CD4-positive, alpha-beta T cell (primary cell): ENCODE measurements at regions of chr12 and their contacts with region 1.

Region 1: DNA sequence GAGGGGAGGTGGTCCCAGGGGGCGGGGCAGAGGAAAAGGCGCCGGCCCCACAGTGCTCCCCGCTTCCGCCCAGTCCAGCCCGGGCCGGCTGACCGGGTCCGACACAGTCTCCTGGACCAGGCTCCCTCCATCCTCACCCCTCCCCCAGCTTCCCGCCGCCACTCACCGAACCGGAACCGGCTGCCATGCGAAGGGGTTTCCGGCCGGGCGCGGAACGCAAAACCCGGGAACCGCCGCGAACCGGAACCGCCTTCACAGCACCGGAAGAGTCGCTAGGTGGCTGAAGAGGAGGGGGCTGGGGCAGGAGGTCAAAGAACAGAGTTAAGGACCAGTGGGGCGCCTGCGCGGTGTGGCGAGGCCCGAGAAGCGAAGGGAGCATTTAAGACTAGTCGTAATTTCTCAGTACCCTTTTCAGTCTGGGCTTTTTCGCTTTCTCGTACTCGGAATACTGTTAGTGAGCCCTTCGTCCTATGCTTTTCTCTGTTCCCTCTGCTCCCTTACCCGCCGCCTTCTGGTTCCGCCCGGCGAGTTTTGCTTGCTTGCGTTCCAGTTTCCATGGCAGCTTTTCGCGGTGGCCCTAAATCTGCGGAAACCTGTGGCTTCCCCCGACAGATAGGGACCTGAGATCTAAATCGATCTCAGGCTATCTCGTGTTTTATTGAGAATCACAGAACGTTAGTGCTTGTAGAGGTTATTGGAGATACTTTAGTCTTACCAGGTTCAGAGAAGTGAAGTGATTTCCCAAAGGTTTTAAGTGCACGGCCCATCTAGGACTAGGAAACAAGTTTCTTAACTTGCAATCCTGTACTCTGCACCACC is at the start of gene SENP1:
- DNase-seq: peak; percentile 84 to 95 (median 88)
- ATAC-seq: peak; percentile 80
- H3K4me3 ChIP-seq: peak within 1 kb of the TSS; percentile 89
- H3K4me3 Mint-ChIP-seq: peak within 1 kb of the TSS; percentile 94
- H3K27ac ChIP-seq: peak within 1 kb of the TSS; percentile 94 to 96
- H3K27ac Mint-ChIP-seq: peak within 1 kb of the TSS; percentile 89
- H3K4me1 ChIP-seq: peaks cover 33% of the 10 kb centered on the region
- H3K4me1 Mint-ChIP-seq: peaks cover 54% of the 10 kb centered on the region
- H3K27me3 ChIP-seq: no peaks in the 10 kb centered on the region
- H3K27me3 Mint-ChIP-seq: no peaks in the 10 kb centered on the region
- CTCF ChIP-seq: peak; percentile 44
- total RNA-seq, gene SENP1: 20.3 to 25.7 TPM

Region 2: DNA sequence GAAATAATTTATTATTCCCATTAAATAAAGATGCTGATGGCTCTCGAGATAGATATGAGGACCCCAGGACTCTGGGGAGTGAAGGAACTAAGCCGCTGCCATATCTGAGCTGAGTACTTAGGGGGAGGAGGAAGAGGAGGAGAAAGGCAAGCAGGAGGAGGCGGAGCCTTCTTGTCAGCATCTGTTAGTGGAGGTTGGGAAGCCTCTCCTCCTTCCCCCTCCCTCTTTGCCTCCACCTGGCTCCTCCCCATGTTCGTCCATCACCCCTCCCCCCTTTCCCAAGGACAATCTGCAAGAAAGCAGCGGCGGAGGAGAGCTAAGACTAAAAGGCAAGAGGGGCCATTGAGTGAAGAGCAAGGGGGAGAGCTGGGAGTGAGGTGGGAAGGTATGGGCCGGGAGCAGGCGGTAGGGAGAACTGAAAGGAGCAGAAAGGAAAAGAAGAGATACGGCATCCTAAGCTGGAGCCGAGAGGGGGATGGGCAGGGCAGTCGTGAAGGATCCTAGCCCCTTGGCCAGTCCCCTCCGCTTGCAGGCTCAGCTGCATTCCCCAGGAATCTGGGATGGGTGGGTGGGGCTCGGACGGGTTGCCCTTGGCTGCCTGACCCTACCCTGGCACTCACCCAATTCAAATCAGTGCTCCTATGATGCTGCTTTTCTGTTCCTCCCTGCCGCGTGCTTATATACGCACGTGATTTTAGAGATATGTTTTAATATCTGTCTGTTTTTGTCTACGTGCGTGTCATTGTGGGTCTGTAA is 13.2 kb after region 1 on chr12 and contains the start of gene PFKM:
- CTCF ChIA-PET with region 1: no interaction called
- POLR2A ChIA-PET with region 1: interaction called, 19 read pairs
- intact Hi-C with region 1: loop called in 1 of 2 experiments (anchors 2 kb)
- DNase-seq: peak; percentile 37 to 88 (median 56)
- ATAC-seq: peak; percentile 98
- H3K4me3 ChIP-seq: peak within 1 kb of the TSS; percentile 74
- H3K4me3 Mint-ChIP-seq: peak within 1 kb of the TSS; percentile 98
- H3K27ac ChIP-seq: no peak within 1 kb of the TSS
- H3K27ac Mint-ChIP-seq: peak within 1 kb of the TSS; percentile 52
- H3K4me1 ChIP-seq: peaks cover 15% of the 10 kb centered on the region
- H3K4me1 Mint-ChIP-seq: peaks cover 29% of the 10 kb centered on the region
- H3K27me3 ChIP-seq: no peaks in the 10 kb centered on the region
- H3K27me3 Mint-ChIP-seq: peaks cover 17% of the 10 kb centered on the region
- CTCF ChIP-seq: no peak
- total RNA-seq, gene PFKM: 9.3 to 9.4 TPM

Region 3: DNA sequence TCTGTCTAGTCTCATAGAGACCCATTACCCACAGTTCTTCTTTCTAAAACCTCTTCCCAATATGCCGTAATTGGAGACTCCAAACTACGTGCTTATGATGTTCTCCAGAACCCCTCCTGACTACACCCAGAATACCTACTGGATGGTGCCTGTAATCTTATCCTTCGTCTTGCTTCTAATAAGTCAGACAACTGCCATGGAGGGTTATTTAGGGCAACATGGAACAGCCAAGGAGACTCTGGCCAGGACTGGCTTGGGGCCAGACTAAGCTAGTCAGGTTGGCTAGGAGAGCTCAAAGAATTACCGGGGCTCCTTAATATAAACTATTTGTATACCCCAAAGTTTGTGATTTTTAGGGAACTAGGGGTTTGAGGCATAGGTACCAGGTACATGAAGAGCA is 19.9 kb after region 1 on chr12:
- CTCF ChIA-PET with region 1: no interaction called
- POLR2A ChIA-PET with region 1: interaction called, 6 read pairs
- intact Hi-C with region 1: loop called in 1 of 2 experiments (anchors 2 kb)
- DNase-seq: no peak
- ATAC-seq: no peak
- H3K4me3 ChIP-seq: no peak overlapping the region
- H3K4me3 Mint-ChIP-seq: no peak overlapping the region
- H3K27ac ChIP-seq: no peak overlapping the region
- H3K27ac Mint-ChIP-seq: no peak overlapping the region
- H3K4me1 ChIP-seq: no peaks in the 10 kb centered on the region
- H3K4me1 Mint-ChIP-seq: peaks cover 3% of the 10 kb centered on the region
- H3K27me3 ChIP-seq: no peaks in the 10 kb centered on the region
- H3K27me3 Mint-ChIP-seq: no peaks in the 10 kb centered on the region
- CTCF ChIP-seq: no peak

Region 4: DNA sequence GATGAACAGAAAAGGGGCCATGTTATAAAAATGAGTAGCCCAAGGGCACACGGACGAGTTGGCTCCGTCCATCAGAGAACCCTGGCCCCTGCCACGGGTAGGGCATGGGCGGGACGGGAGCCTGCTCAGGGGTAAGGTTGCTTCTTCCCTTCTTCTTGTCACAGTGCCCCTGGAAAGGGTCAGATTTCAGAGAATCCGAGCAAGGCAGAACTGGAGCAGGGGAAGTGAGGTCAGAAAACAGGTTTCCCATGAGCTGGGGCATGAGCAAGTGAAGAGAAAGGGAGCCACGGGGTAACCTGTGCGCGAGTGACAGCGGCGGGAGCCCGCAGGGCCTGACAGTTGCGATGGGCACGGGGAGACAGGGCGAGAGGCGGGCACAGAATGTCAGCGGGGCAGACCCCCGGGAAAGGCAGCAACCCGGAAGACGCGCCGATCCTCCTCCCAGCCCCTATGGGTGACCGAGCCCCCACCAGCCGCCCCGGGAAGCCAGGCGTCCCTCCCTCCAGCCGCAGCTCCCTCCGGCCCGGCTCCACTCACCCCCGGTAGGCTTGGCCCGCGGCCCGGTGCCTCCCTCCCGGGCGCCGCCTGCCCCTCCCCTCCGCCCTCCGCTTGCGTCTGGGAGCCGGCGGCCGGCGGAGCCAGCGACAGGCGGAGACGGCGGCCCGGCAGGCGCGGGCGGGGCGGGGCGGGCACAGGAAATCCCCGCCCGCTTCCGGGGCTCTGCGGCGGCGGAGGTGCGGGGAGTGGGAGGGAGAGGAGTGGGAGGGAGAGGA is 244.4 kb after region 1 on chr12 and contains the start of gene ZNF641:
- CTCF ChIA-PET with region 1: no interaction called
- POLR2A ChIA-PET with region 1: no interaction called
- intact Hi-C with region 1: loop called in 1 of 2 experiments (anchors 5 kb)
- DNase-seq: peak; percentile 68 to 94 (median 80)
- ATAC-seq: peak; percentile 88
- H3K4me3 ChIP-seq: peak within 1 kb of the TSS; percentile 96
- H3K4me3 Mint-ChIP-seq: peak within 1 kb of the TSS; percentile 97
- H3K27ac ChIP-seq: peak within 1 kb of the TSS; percentile 70 to 81
- H3K27ac Mint-ChIP-seq: peak within 1 kb of the TSS; percentile 98
- H3K4me1 ChIP-seq: peaks cover 19% of the 10 kb centered on the region
- H3K4me1 Mint-ChIP-seq: peaks cover 47% of the 10 kb centered on the region
- H3K27me3 ChIP-seq: no peaks in the 10 kb centered on the region
- H3K27me3 Mint-ChIP-seq: no peaks in the 10 kb centered on the region
- CTCF ChIP-seq: no peak
- total RNA-seq, gene ZNF641: 16.6 to 19.8 TPM